OCI-LY7 (cell line): ENCODE measurements at regions of chr10 and their contacts with region 1.

Region 1: DNA sequence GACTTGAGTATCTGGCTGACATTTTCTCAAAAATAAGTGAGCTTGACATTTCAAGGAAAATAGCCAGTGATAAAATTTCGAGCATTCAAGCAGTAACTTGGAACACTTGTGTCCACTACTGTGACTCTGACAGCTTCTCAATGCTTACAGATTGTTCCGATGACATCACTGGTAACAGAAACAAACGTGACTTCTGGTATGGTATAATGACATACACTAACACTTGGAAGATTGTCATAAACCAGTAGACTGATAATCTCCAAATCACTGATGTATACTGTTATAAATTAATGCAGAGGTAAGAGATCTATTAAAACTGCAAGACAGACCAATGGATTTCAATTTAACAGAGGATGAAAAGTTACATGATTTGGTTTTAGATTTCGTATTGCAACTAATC is 6.5 kb downstream of the MINDY3 start:
- DNase-seq: no peak
- H3K4me3 ChIP-seq: no peak overlapping the region
- H3K27ac ChIP-seq: no peak overlapping the region
- H3K4me1 ChIP-seq: peaks cover 11% of the 10 kb centered on the region
- CTCF ChIP-seq: no peak

Region 2: GRCh38 chr10:15842556-15843169 is 11.1 kb before region 1 on chr10:
- CTCF ChIA-PET with region 1: no interaction called
- POLR2A ChIA-PET with region 1: interaction called, 12 read pairs
- intact Hi-C with region 1: no loop called
- DNase-seq: no peak
- H3K4me3 ChIP-seq: no peak overlapping the region
- H3K27ac ChIP-seq: no peak overlapping the region
- H3K4me1 ChIP-seq: peaks cover 5% of the 10 kb centered on the region
- CTCF ChIP-seq: no peak